CD4-positive, alpha-beta memory T cell (primary cell): ENCODE measurements at regions of chr2 and their contacts with region 1.

Region 1: DNA sequence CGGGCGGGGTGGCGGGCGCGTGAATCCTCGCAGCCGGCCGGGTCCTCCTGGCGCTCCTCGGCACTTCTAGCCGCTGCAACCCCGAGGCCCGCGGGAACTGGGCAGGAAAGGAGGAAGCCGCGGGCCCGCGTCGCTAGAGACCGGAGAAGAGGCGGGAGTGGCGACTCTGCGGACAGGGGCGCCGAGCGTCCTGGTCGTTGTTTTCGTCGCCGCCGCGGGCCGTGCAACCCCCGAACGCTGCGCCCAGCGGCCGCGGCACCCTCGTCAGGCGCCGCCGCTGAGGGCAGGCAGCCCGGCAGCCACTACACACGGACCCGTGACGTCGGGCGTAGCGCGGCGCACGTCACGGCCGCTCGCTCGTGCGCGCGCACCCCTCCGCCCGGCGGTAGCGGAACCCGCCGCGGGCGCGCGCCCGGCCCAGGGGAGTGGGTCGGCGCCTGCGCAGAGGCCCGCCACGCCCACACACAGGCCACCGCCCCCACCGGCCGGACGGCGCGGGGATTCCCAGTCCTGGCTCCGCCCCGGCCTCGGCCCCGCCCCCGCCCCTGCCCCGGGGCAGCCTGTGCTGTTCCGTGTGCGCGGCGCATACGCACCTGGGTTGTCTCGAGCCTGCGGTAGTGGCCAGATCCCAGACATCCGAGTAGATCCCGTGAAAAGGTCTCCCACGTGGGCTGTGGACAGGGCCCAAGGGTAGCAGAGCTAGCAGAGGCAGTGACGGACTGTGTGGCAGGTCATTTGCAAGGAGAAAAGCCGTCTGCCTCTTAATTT is at the start of gene MAP3K2:
- DNase-seq: peak; percentile 92 to 94 (median 93)
- H3K4me3 ChIP-seq: peak within 1 kb of the TSS; percentile 62 to 65
- H3K4me3 Mint-ChIP-seq: peak within 1 kb of the TSS; percentile 89 to 97 (median 94)
- H3K27ac ChIP-seq: peak within 1 kb of the TSS; percentile 97
- H3K27ac Mint-ChIP-seq: peak within 1 kb of the TSS; percentile 99 to 100 (median 99)
- H3K4me1 ChIP-seq: peaks cover 46% of the 10 kb centered on the region
- H3K4me1 Mint-ChIP-seq: peaks cover 49 to 71% (median 54%) of the 10 kb centered on the region in 4 donors
- H3K27me3 ChIP-seq: no peaks in the 10 kb centered on the region
- H3K27me3 Mint-ChIP-seq: no peaks in the 10 kb centered on the region
- total RNA-seq, gene MAP3K2: 85.6 to 87.2 TPM

Region 2: DNA sequence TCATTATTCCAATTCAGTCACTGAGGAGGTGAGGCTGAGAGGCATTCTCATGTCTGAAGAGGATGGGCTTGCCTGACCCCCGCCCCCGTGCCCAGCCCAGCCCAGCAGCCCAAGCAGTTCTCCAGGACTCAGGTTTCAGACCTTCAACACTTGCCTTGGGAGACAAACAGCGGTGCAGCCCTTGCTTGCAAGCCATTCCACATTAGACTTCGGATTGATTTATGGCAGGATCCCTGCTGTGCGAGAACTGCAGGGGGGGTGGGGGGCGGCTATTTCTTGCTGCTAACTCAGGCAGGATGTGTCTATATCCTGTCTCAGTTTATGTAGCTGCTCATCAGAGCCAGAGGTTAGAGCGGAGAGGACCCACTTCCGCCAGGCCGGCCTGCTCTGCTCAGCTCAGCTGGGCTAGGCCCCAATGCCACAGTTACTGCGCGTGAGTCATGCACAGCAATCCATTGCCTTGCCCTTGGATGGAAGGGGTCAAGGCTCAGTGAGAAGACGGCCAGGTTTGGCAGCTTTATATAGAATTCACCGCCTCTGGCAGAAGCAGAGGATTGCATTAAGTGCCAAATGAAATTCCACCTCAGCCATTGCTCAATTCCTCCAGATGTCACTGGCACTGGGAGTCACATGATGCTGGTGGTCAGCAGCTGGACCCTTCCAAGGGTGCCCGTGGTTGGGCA is 730.1 kb before region 1 on chr2:
- CTCF ChIA-PET with region 1: no interaction called
- POLR2A ChIA-PET with region 1: no interaction called
- intact Hi-C with region 1: loop called (anchors 5 kb)
- DNase-seq: peak; percentile 61 to 87 (median 74)
- H3K4me3 ChIP-seq: peak overlapping the region; percentile 79 to 96
- H3K4me3 Mint-ChIP-seq: peak overlapping the region; percentile 96 to 99 (median 98)
- H3K27ac ChIP-seq: peak overlapping the region; percentile 78
- H3K27ac Mint-ChIP-seq: peak overlapping the region; percentile 96 to 99 (median 97)
- H3K4me1 ChIP-seq: peaks cover 58% of the 10 kb centered on the region
- H3K4me1 Mint-ChIP-seq: peaks cover 42 to 77% (median 63%) of the 10 kb centered on the region in 4 donors
- H3K27me3 ChIP-seq: no peaks in the 10 kb centered on the region
- H3K27me3 Mint-ChIP-seq: no peaks in the 10 kb centered on the region

Region 3: GRCh38 chr2:127355386-127356008 is 32.3 kb before region 1 on chr2:
- CTCF ChIA-PET with region 1: no interaction called
- POLR2A ChIA-PET with region 1: no interaction called
- intact Hi-C with region 1: loop called (anchors 2 kb)
- DNase-seq: peak; percentile 43 to 63 (median 48)
- H3K4me3 ChIP-seq: no peak overlapping the region
- H3K4me3 Mint-ChIP-seq: no peak overlapping the region
- H3K27ac ChIP-seq: no peak overlapping the region
- H3K27ac Mint-ChIP-seq: peak overlapping the region in 1 of 7 donors; percentile 73
- H3K4me1 ChIP-seq: peaks cover 16% of the 10 kb centered on the region
- H3K4me1 Mint-ChIP-seq: peaks cover 39 to 78% (median 59%) of the 10 kb centered on the region in 4 donors
- H3K27me3 ChIP-seq: no peaks in the 10 kb centered on the region
- H3K27me3 Mint-ChIP-seq: no peaks in the 10 kb centered on the region

Region 4: GRCh38 chr2:127408004-127408806 is 20.4 kb after region 1 on chr2:
- CTCF ChIA-PET with region 1: interaction called, 5 read pairs
- POLR2A ChIA-PET with region 1: interaction called, 104 read pairs
- intact Hi-C with region 1: loop called (anchors 1 kb)
- DNase-seq: peak; percentile 79 to 93 (median 84)
- H3K4me3 ChIP-seq: peak overlapping the region in 1 of 2 donors; percentile 32
- H3K4me3 Mint-ChIP-seq: peak overlapping the region; percentile 68 to 80 (median 76)
- H3K27ac ChIP-seq: peak overlapping the region; percentile 57
- H3K27ac Mint-ChIP-seq: peak overlapping the region in 5 of 7 donors; percentile 65 to 87 (median 79)
- H3K4me1 ChIP-seq: peaks cover 31% of the 10 kb centered on the region
- H3K4me1 Mint-ChIP-seq: peaks cover 8 to 30% (median 23%) of the 10 kb centered on the region in 4 donors
- H3K27me3 ChIP-seq: no peaks in the 10 kb centered on the region
- H3K27me3 Mint-ChIP-seq: no peaks in the 10 kb centered on the region

Region 5: DNA sequence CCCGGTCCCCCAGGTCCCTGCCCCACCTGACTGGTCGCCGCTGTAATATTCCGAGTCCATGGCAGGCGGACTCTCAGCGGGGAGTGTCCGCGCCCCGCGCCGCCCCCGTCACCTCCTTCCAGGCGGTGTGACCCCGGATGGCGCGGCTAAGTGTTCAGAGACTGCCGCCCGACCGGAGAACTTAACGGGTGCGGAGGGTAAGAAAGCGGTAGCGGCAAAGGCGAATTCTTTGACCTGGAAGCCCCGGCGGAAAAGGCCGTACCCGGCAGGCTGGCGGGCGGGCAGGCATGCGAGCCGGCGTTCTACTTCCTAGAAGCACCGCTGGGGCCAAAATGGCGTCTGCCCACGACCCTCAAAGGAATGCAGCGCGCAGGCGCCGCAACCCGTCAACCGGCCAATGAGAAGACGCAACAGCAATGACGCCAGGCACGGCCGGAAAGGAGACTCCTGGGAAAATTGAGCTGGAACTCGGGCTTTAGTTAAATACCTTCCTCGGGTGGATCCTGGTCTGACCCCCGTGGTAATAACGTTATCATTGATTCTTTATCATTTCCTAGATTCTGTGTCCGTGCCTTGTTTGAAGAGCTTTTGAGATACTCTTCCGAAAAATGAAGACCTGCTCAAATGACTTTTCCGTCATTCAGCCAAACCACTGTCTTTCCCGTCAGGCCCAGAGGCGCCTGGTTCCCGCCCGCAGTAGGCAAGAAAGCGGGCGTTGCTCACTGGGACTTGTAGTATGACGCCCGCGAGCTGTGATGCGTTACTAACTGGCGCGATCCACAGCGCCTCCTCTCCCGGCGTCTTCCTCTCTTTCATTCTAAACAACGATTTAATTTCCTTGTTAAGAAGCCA is 138.5 kb after region 1 on chr2 and contains the start of gene IWS1:
- CTCF ChIA-PET with region 1: no interaction called
- POLR2A ChIA-PET with region 1: interaction called, 9 read pairs
- intact Hi-C with region 1: loop called (anchors 1 kb)
- DNase-seq: peak; percentile 93 to 95 (median 94)
- H3K4me3 ChIP-seq: peak within 1 kb of the TSS; percentile 61
- H3K4me3 Mint-ChIP-seq: peak within 1 kb of the TSS; percentile 88 to 99 (median 96)
- H3K27ac ChIP-seq: peak within 1 kb of the TSS; percentile 98
- H3K27ac Mint-ChIP-seq: peak within 1 kb of the TSS; percentile 96 to 100 (median 98)
- H3K4me1 ChIP-seq: peaks cover 47% of the 10 kb centered on the region
- H3K4me1 Mint-ChIP-seq: peaks cover 26 to 62% (median 33%) of the 10 kb centered on the region in 4 donors
- H3K27me3 ChIP-seq: no peaks in the 10 kb centered on the region
- H3K27me3 Mint-ChIP-seq: no peaks in the 10 kb centered on the region
- total RNA-seq, gene IWS1: 55.2 to 59.7 TPM

Region 6: DNA sequence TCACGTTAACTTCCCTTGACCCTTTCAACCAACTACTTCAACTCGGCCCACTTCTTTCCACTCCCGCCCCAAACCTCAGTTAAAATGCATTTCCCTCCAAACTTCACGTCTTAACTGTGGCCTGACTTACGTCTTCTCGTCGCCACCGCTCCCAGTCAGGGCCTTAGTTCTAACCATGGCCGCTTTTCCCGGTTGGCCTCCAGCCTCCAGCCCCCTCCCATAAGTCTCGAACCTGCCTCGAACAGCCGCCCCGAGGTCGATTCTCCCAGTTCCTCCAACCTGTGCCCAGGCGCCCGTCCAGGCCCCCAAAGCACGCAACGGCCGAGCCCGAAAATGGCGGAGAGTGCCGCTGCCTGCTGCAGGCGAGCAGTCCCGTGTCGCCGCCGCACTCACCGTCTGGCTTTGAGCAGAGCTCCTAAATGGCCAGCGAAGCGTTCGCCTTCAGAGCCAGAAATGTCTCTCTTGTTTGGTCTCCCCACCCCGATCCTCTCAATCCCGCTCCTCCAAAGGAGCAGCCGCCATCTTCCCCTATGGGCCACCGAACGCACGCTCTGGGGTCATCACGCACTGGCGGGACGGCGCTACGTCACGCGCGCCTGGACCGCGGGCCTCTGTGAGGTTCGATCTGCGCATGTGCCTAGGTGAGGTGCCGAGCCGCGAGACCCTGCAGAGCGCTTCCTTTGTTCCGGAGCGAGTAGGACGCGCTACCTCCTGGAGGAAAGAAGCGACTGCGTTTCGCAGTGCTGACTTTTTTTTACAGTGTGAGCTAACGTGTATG is 423.0 kb after region 1 on chr2 and contains the start of gene WDR33:
- CTCF ChIA-PET with region 1: no interaction called
- POLR2A ChIA-PET with region 1: no interaction called
- intact Hi-C with region 1: loop called (anchors 2 kb)
- DNase-seq: peak; percentile 92 to 95 (median 93)
- H3K4me3 ChIP-seq: peak within 1 kb of the TSS; percentile 68 to 98
- H3K4me3 Mint-ChIP-seq: peak within 1 kb of the TSS; percentile 93 to 99 (median 98)
- H3K27ac ChIP-seq: peak within 1 kb of the TSS; percentile 96
- H3K27ac Mint-ChIP-seq: peak within 1 kb of the TSS; percentile 98 to 100 (median 99)
- H3K4me1 ChIP-seq: peaks cover 47% of the 10 kb centered on the region
- H3K4me1 Mint-ChIP-seq: peaks cover 34 to 59% (median 48%) of the 10 kb centered on the region in 4 donors
- H3K27me3 ChIP-seq: no peaks in the 10 kb centered on the region
- H3K27me3 Mint-ChIP-seq: peaks cover 0 to 4% of the 10 kb centered on the region in 2 donors
- total RNA-seq, gene WDR33: 84.9 to 86.2 TPM

Region 7: GRCh38 chr2:128027801-128028667 is 640.2 kb after region 1 on chr2 and contains the start of gene SAP130:
- CTCF ChIA-PET with region 1: no interaction called
- POLR2A ChIA-PET with region 1: interaction called, 5 read pairs
- intact Hi-C with region 1: loop called (anchors 10 kb)
- DNase-seq: peak; percentile 97 to 99 (median 98)
- H3K4me3 ChIP-seq: peak within 1 kb of the TSS; percentile 36 to 82
- H3K4me3 Mint-ChIP-seq: peak within 1 kb of the TSS; percentile 94 to 99 (median 98)
- H3K27ac ChIP-seq: peak within 1 kb of the TSS; percentile 73
- H3K27ac Mint-ChIP-seq: peak within 1 kb of the TSS; percentile 93 to 98 (median 97)
- H3K4me1 ChIP-seq: peaks cover 23% of the 10 kb centered on the region
- H3K4me1 Mint-ChIP-seq: peaks cover 15 to 24% (median 20%) of the 10 kb centered on the region in 4 donors
- H3K27me3 ChIP-seq: no peaks in the 10 kb centered on the region
- H3K27me3 Mint-ChIP-seq: no peaks in the 10 kb centered on the region
- total RNA-seq, gene SAP130: 25.5 to 30.2 TPM

Region 8: DNA sequence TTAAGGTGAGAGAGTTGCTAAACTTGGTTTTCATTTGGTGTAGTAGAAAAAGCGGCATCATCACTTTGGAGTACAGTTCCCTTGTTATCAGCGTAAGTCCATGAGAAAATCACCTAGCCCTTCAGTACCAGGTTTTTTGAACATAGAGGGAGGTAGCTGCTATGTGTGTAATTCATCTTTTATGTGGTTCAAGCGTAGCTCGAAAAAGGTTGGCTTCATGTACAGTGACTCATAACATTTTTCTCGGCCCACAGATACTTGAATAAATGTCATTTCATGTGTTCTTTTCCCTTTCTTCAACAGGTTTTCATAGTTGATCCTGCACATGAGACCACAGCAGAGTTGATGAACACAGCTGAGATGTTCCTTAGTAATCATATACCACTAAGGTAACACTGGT is 746.7 kb after region 1 on chr2:
- CTCF ChIA-PET with region 1: no interaction called
- POLR2A ChIA-PET with region 1: no interaction called
- intact Hi-C with region 1: no loop called
- DNase-seq: no peak
- H3K4me3 ChIP-seq: no peak overlapping the region
- H3K4me3 Mint-ChIP-seq: no peak overlapping the region
- H3K27ac ChIP-seq: no peak overlapping the region
- H3K27ac Mint-ChIP-seq: peak overlapping the region in 2 of 7 donors; percentile 19 to 49
- H3K4me1 ChIP-seq: no peaks in the 10 kb centered on the region
- H3K4me1 Mint-ChIP-seq: peaks cover 0 to 4% (median under 1%) of the 10 kb centered on the region in 4 donors
- H3K27me3 ChIP-seq: no peaks in the 10 kb centered on the region
- H3K27me3 Mint-ChIP-seq: no peaks in the 10 kb centered on the region